ENCODE measurements at regions of chr15 and their contacts with region 1.

Region 1: DNA sequence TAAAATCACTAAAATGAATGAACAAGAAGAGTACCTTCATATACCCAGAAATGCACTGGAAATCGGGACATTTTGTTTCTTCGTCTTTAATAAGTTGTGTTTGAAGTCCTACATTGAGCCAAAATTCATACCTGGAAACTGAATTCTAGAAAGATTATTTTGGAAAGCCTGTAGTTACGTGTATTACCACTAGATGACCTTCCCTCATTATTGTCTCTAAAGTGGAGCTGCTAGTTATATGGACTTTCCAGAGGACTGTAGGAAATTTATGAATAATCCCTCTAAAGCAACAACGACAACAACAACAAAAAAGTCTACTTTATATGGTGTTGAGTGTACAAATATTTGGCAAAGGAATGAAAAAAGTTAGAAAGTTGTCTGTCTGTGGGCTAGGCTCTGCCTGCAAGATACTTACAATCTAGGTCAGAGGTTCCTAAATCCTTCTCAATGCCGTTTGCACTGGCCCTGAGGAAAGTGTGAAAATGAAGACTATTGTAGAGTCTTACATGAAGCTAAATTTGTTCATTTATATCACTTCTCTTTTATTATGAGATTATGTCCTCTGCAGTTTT is 234.8 kb upstream of the NR2E3 start:
- H3K4me3 ChIP-seq: no peak overlapping the region
- H3K27ac ChIP-seq: no peak overlapping the region
- H3K4me1 ChIP-seq: no peaks in the 10 kb centered on the region
- CTCF ChIP-seq: peak; percentile 50; the same call in 1 of the 2 replicates

Region 2: GRCh38 chr15:71448688-71449114 is 126.9 kb before region 1 on chr15:
- CTCF ChIA-PET with region 1: interaction called, 19 read pairs
- POLR2A ChIA-PET with region 1: no interaction called
- H3K4me3 ChIP-seq: no peak overlapping the region
- H3K27ac ChIP-seq: no peak overlapping the region
- H3K4me1 ChIP-seq: peaks cover 13% of the 10 kb centered on the region
- CTCF ChIP-seq: peak; percentile 78

Region 3: DNA sequence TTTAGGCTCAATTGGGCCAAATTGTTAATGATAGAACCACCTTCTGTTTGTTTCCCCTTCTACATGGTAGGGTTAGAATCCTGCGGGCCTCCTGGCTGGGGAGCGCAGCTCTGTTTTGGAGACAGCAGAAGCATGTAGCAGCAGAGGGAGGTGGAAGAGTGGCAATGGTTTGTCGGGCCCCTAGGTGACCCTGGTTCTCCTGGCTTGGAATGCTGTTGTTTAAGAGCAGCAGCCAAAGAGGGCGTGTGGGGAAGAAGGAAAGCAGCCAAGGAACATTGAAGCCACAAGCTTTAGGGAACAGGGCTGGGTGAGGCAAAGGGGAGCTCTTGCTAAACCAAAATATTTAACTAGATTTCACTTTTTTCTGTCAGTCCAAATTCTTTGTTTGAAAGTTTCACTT is 21.1 kb after region 1 on chr15:
- CTCF ChIA-PET with region 1: interaction called, 19 read pairs
- POLR2A ChIA-PET with region 1: no interaction called
- H3K4me3 ChIP-seq: no peak overlapping the region
- H3K27ac ChIP-seq: no peak overlapping the region
- H3K4me1 ChIP-seq: peaks cover 17% of the 10 kb centered on the region
- CTCF ChIP-seq: no peak

Region 4: GRCh38 chr15:71691458-71692417 is 116.2 kb after region 1 on chr15:
- CTCF ChIA-PET with region 1: interaction called, 10 read pairs
- POLR2A ChIA-PET with region 1: no interaction called
- H3K4me3 ChIP-seq: no peak overlapping the region; the same call in 1 of the 2 replicates
- H3K27ac ChIP-seq: peak overlapping the region; percentile 54; the same call in 1 of the 2 replicates
- H3K4me1 ChIP-seq: peaks cover 14% of the 10 kb centered on the region
- CTCF ChIP-seq: no peak

Region 5: DNA sequence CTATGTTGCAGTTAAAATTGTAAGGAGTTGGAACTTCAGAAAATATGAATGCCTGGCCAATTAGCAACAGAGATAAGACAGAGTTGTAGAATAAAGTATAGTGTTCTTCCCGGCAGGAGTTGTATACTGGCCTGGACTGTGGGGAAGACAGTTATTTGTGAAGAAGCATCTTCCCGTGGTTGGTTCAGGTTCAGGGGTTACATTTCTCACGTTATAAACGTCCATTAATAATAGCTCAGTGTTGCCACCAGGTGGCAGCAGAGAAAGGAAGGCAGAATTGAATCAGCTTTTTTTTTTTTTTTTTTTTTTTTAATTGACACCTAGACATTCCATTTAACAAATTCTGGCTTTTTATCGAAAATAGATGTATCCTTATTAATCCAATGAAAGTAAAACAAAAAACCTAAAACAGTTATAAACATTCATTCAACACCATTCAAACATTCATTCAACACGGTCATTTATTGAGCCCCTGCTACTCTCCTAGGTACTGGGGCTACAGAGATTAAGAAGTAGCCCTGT is 168.4 kb after region 1 on chr15:
- CTCF ChIA-PET with region 1: interaction called, 18 read pairs
- POLR2A ChIA-PET with region 1: no interaction called
- H3K4me3 ChIP-seq: no peak overlapping the region
- H3K27ac ChIP-seq: no peak overlapping the region
- H3K4me1 ChIP-seq: peaks cover 22% of the 10 kb centered on the region
- CTCF ChIP-seq: peak; percentile 70; the same call in 1 of the 2 replicates

Measured in HEK293 (cell line).